Ascending aorta (tissue), 2 donors: ENCODE measurements at regions of chr18 and their contacts with region 1.

Region 1: DNA sequence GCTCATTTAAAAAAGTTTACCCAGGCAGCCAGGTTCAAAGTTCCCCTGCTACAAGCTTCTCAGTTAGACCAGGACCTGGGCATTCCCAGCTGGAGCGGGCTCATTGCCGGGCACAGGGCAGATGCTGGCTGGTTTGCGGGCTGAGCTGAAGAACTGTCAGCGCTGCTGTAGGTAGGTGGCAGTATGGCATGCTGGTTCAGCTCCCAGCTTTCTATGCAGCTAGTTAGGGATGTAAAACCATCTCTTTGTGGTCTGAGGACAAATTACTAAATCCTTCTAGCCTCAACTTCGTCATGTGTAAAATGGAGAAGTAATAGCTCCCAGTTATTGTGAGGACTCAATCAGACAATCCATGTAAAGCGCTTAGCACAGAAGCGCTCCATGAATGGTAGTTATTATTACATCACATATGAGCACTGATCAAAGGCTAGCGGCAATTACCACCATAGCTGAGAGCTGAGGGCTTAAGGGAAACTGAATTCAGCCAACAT is 2.4 kb upstream of the LDLRAD4 start:
- DNase-seq: peak; percentile 43 to 92
- H3K4me3 ChIP-seq: peak overlapping the region; percentile 68 to 91
- H3K27ac ChIP-seq: peak overlapping the region; percentile 69 to 92
- H3K4me1 ChIP-seq: peaks cover 0 to 9% of the 10 kb centered on the region in 2 donors
- H3K27me3 ChIP-seq: no peaks in the 10 kb centered on the region
- CTCF ChIP-seq: peak; percentile 64 to 83 (median 82)

Region 2: GRCh38 chr18:13260197-13260934 is 44.2 kb after region 1 on chr18:
- intact Hi-C with region 1: loop called (anchors 1 kb)
- DNase-seq: peak in 1 of 2 donors; percentile 72
- H3K4me3 ChIP-seq: peak overlapping the region; percentile 5 to 19
- H3K27ac ChIP-seq: peak overlapping the region; percentile 85 to 88
- H3K4me1 ChIP-seq: peaks cover 24 to 60% of the 10 kb centered on the region in 2 donors
- H3K27me3 ChIP-seq: no peaks in the 10 kb centered on the region
- CTCF ChIP-seq: no peak

Region 3: DNA sequence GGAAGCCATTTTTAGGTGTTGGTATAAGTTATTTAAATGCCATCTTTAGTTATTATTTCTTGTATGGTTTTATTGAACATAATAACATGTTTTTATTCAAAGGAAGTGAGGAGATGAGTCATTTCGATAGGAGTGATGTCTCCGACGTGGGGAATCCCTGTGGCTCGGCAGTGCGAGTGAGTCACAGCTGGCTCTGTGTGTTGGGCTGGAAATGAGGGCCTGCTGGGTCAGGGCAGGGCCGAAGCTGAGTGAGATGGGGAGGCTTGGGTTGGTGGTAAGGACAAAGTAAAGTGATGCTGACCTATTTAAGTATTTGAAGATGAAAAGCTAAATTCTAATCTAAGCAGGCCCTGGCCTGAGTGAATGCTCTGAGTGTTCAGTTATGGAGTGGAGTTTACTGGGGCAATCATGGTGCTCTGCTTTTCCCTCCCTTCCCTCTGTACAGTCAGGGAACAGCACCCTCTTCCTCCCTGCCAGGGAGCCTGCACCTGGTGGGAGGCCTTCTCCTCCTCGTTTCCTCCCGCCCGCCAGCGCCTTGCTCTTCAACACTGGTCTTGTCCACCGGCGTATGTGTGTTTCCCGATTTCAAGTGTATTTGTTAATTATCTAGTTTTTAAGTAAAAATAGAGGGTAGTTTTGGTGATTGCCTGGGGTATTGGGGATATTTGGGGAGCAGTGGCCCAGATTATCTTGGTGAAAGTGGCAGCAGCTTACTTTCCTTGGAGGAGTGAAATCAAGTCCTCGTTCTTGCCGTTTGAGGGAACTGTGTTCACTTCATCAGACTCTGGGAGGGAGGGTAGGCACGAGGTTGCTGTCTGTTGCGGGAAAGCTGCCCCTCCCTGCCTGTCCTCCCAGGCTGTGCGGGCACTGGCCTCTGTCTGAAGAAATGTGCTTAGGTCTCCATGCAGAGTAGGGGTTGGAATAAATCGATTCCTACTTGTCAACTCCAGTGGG is 159.4 kb after region 1 on chr18:
- intact Hi-C with region 1: loop called (anchors 2 kb)
- DNase-seq: peak; percentile 64 to 93
- H3K4me3 ChIP-seq: peak overlapping the region in 1 of 2 donors; percentile 9
- H3K27ac ChIP-seq: peak overlapping the region; percentile 69 to 73
- H3K4me1 ChIP-seq: peaks cover 6 to 37% of the 10 kb centered on the region in 2 donors
- H3K27me3 ChIP-seq: no peaks in the 10 kb centered on the region
- CTCF ChIP-seq: peak; percentile 9 to 18 (median 9)

Region 4: DNA sequence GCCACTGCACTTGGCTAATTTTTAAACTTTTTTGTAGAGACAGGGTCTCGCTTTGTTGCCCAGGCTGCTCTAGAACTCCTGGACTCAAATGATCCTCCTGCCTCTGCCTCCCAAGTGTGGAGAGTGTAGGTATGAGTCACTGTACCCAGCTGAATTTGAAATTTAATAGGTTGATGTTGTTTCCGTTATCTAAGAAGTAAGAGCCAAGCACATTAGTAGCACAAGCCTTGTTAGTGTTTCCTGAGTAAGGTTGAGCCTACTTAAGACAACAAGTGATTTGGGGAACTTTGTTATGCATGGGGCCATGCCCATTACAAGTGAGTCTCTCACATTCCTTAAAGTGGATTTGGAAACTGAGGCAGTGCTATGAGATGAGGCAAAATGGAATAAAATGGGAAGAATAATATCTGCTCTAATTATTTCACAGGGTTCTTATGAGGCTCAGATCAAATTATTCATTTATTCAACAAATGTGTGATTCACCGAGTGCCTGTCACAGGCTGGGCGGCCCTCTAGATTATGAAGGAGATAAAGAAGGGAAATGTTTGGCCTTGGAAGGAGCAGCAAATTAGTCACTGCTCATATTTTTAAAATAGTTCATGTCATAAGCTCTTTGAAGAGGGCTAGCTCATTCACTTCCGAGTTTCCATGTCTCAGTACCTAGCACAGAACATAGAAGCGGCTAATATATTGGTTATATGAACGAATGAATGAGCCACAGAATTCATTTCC is 219.6 kb after region 1 on chr18:
- intact Hi-C with region 1: loop called (anchors 2 kb)
- DNase-seq: peak; percentile 57 to 90
- H3K4me3 ChIP-seq: no peak overlapping the region
- H3K27ac ChIP-seq: peak overlapping the region; percentile 86 to 91
- H3K4me1 ChIP-seq: peaks cover 3 to 50% of the 10 kb centered on the region in 2 donors
- H3K27me3 ChIP-seq: no peaks in the 10 kb centered on the region
- CTCF ChIP-seq: no peak

Region 5: GRCh38 chr18:13629841-13630715 is 413.9 kb after region 1 on chr18:
- intact Hi-C with region 1: loop called (anchors 1 kb)
- DNase-seq: no peak
- H3K4me3 ChIP-seq: no peak overlapping the region
- H3K27ac ChIP-seq: peak overlapping the region in 1 of 2 donors; percentile 34
- H3K4me1 ChIP-seq: peaks cover 3% of the 10 kb centered on the region in 2 donors
- H3K27me3 ChIP-seq: no peaks in the 10 kb centered on the region
- CTCF ChIP-seq: peak; percentile 45 to 80 (median 74)

Region 6: DNA sequence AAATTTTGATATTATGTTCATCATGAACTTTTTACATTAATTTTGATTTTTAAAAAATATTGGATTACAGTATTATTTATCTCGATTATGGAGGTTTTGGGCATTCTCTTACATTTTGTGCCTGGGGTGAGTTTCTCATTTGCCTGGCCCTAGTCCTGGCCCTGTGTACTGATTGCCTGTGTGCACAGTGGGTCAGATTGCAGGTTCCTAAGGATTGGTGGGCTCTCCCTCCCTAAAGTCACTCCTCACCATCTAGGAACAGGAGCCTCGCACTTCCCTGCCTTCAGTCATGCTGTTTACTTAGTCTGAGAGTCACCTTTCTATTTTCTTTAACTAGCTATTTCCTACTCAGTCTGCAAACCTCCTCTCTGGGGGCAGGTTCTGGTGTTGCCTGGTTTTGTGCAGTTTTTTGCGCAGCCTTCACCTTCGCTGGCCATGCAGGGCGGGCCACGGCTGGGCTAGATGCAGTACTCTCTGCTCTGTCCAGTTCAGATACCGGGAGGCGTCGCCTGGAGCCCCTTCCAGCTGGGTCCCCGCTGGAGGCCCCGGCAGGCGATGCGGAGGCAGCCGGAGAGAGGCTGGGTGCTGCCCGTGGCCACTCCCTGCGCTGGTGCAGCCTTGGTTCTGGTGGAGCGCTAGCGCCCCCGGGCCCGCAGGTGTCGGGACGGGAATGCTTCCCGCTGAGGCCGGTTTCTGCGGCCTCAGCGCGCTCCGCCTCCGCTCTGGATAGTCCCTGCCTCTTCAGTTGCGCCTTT is 584.5 kb after region 1 on chr18:
- intact Hi-C with region 1: loop called (anchors 5 kb)
- DNase-seq: peak in 1 of 2 donors; percentile 77
- H3K4me3 ChIP-seq: peak overlapping the region; percentile 32 to 62
- H3K27ac ChIP-seq: no peak overlapping the region
- H3K4me1 ChIP-seq: no peaks in the 10 kb centered on the region
- H3K27me3 ChIP-seq: no peaks in the 10 kb centered on the region
- CTCF ChIP-seq: peak; percentile 35 to 64 (median 35)